ENCODE measurements at regions of chr11 and their contacts with region 1.

Region 1: DNA sequence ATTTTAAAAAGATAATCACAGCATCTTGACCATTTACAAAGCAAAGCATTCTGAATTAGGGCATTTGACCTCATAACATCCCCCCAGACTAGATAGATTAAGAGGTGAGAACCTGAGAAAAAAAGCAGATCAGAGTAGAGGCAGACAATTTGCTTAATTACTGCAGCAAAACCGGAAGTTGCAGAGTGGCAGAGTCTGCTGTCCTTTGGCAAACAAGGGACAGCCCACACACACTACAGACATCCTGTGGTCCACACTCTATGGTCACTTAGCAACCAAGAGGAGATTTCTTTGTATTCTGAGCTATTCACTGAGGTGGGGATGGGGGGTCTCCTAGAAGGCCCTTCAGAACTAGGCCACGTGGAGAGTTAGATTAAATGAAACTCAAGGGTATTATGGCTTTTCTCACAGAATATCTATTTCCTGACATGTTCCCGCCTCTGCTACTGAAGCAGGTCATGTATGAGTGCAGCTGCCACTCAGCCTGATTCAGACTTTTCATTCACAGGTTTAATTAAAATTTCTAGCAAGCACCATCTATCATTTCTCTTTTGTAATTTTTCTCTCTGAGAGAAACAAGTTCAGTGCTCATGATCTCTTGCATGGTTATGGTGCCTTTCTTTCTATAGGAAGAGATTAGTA is 48.5 kb downstream of the SVIP start:
- DNase-seq: no peak
- ATAC-seq: peak; percentile 81
- H3K4me3 ChIP-seq: no peak overlapping the region
- H3K27ac ChIP-seq: no peak overlapping the region
- H3K4me1 ChIP-seq: peaks cover 11% of the 10 kb centered on the region
- H3K27me3 ChIP-seq: no peaks in the 10 kb centered on the region
- CTCF ChIP-seq: no peak
- EP300 ChIP-seq: 0 out of 4 replicates have a peak, but pooled peaks of 1 of the 2 experiments have one; percentile 40
- POLR2A ChIP-seq: no peak
- RAD21 ChIP-seq: no peak

Region 2: GRCh38 chr11:22307065-22307464 is 474.0 kb before region 1 on chr11:
- CTCF ChIA-PET with region 1: no interaction called
- POLR2A ChIA-PET with region 1: no interaction called
- RAD21 ChIA-PET with region 1: no interaction called
- SMC1A ChIA-PET with region 1: no interaction called
- in situ Hi-C with region 1: no loop called
- intact Hi-C with region 1: no loop called
- DNase-seq: no peak
- ATAC-seq: no peak
- H3K4me3 ChIP-seq: no peak overlapping the region
- H3K27ac ChIP-seq: no peak overlapping the region
- H3K4me1 ChIP-seq: no peaks in the 10 kb centered on the region
- H3K27me3 ChIP-seq: no peaks in the 10 kb centered on the region
- CTCF ChIP-seq: no peak
- EP300 ChIP-seq: no peak
- POLR2A ChIP-seq: no peak
- RAD21 ChIP-seq: no peak

Region 3: DNA sequence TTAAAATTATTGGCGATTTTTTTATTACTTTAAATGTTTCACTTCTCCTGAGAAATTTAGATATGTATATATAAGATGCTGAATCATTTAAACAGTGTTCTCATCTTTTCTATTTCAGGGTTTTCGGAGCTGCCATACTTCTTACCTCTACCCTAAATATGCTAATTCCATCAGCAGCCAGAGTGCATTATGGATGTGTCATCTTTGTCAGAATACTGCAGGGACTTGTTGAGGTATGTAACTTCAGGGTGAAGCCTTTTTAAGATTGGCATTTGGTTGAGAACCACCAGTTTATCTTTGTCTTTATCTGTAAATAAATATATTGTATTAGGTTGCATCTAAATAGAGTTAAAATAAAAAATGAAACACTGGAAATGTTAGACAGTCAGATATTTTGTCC is 421.8 kb before region 1 on chr11:
- CTCF ChIA-PET with region 1: no interaction called
- POLR2A ChIA-PET with region 1: no interaction called
- RAD21 ChIA-PET with region 1: no interaction called
- SMC1A ChIA-PET with region 1: no interaction called
- in situ Hi-C with region 1: no loop called
- intact Hi-C with region 1: no loop called
- DNase-seq: no peak
- ATAC-seq: no peak
- H3K4me3 ChIP-seq: no peak overlapping the region
- H3K27ac ChIP-seq: no peak overlapping the region
- H3K4me1 ChIP-seq: no peaks in the 10 kb centered on the region
- H3K27me3 ChIP-seq: no peaks in the 10 kb centered on the region; a peak in 1 of 4 replicates
- CTCF ChIP-seq: no peak
- EP300 ChIP-seq: no peak
- POLR2A ChIP-seq: no peak
- RAD21 ChIP-seq: no peak

Region 4: GRCh38 chr11:22554221-22554620 is 226.9 kb before region 1 on chr11:
- CTCF ChIA-PET with region 1: no interaction called
- POLR2A ChIA-PET with region 1: no interaction called
- RAD21 ChIA-PET with region 1: no interaction called
- SMC1A ChIA-PET with region 1: no interaction called
- in situ Hi-C with region 1: no loop called
- intact Hi-C with region 1: loop called (anchors 5 kb)
- DNase-seq: peak; percentile 4
- ATAC-seq: peak; percentile 98
- H3K4me3 ChIP-seq: no peak overlapping the region
- H3K27ac ChIP-seq: no peak overlapping the region
- H3K4me1 ChIP-seq: no peaks in the 10 kb centered on the region
- H3K27me3 ChIP-seq: no peaks in the 10 kb centered on the region
- CTCF ChIP-seq: no peak
- EP300 ChIP-seq: peak in 1 of 2 experiments; percentile 43; a peak in 1 of 4 replicates
- POLR2A ChIP-seq: no peak
- RAD21 ChIP-seq: no peak

Region 5: DNA sequence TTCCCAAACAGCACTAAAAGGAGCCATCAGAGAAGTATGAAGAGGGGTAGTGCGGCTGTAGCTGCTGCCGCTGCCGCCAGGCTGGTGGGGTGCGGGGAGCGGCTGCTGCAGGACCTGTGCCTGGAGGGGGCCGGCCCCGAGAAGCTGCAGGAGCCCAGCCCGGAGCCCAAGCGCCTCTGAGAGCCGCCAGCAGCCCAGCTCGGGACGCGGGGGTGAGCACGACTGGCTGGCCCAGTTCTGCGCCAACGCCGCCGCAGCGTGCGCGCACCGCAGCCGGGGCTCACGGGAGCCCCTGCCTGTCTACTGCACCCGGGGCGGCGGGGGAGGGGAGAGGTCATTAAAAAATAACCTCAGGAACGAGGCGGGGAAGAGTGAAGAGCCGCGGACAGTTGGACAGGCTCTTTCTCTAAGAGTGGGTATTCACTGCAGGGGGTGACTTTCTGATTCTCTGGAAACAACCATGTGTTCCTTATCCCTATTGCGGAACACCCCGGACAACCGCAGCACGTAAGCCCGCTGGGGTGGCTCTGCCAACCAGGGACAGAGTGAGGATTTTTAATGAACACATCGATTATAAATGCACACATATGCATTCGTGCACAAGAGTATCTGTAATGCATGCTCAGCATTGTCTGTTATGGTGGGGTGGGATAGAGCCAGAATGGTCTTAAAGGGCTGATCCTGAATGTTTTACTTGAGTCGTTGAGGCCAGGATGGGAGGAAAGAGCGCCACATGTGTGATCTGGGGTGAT is 114.2 kb before region 1 on chr11:
- CTCF ChIA-PET with region 1: interaction called, 135 read pairs
- POLR2A ChIA-PET with region 1: interaction called, 8 read pairs
- RAD21 ChIA-PET with region 1: interaction called, 103 read pairs
- SMC1A ChIA-PET with region 1: interaction called, 251 read pairs
- in situ Hi-C with region 1: loop called (anchors 10 kb)
- intact Hi-C with region 1: no loop called
- DNase-seq: no peak
- ATAC-seq: peak; percentile 72
- H3K4me3 ChIP-seq: peak overlapping the region; percentile 59
- H3K27ac ChIP-seq: peak overlapping the region; percentile 77
- H3K4me1 ChIP-seq: no peaks in the 10 kb centered on the region
- H3K27me3 ChIP-seq: no peaks in the 10 kb centered on the region
- CTCF ChIP-seq: peak in 1 of 3 experiments; percentile 5; a peak in 1 of 6 replicates
- EP300 ChIP-seq: no peak
- POLR2A ChIP-seq: peak; percentile 65; the same call in 1 of the 2 replicates
- RAD21 ChIP-seq: no peak

Region 6: GRCh38 chr11:22730319-22730718 is 50.8 kb before region 1 on chr11:
- CTCF ChIA-PET with region 1: interaction called, 14 read pairs
- POLR2A ChIA-PET with region 1: no interaction called
- RAD21 ChIA-PET with region 1: interaction called, 59 read pairs
- SMC1A ChIA-PET with region 1: interaction called, 44 read pairs
- in situ Hi-C with region 1: no loop called
- intact Hi-C with region 1: loop called (anchors 2 kb)
- DNase-seq: no peak
- ATAC-seq: peak; percentile 88
- H3K4me3 ChIP-seq: no peak overlapping the region
- H3K27ac ChIP-seq: no peak overlapping the region
- H3K4me1 ChIP-seq: no peaks in the 10 kb centered on the region
- H3K27me3 ChIP-seq: no peaks in the 10 kb centered on the region
- CTCF ChIP-seq: peak; percentile 4 to 53 (median 9); a peak in 2 of 6 replicates
- EP300 ChIP-seq: no peak
- POLR2A ChIP-seq: no peak
- RAD21 ChIP-seq: peak; percentile 58

Region 7: GRCh38 chr11:22829231-22830081 is 48.4 kb after region 1 on chr11 and contains the start of gene SVIP:
- CTCF ChIA-PET with region 1: interaction called, 42 read pairs
- POLR2A ChIA-PET with region 1: interaction called, 6 read pairs
- RAD21 ChIA-PET with region 1: interaction called, 39 read pairs
- SMC1A ChIA-PET with region 1: interaction called, 30 read pairs
- in situ Hi-C with region 1: no loop called
- intact Hi-C with region 1: no loop called
- DNase-seq: peak; percentile 69
- ATAC-seq: peak; percentile 94
- H3K4me3 ChIP-seq: peak within 1 kb of the TSS; percentile 87
- H3K27ac ChIP-seq: peak within 1 kb of the TSS; percentile 59
- H3K4me1 ChIP-seq: no peaks in the 10 kb centered on the region
- H3K27me3 ChIP-seq: no peaks in the 10 kb centered on the region
- CTCF ChIP-seq: peak; percentile 76 to 92 (median 89)
- EP300 ChIP-seq: no peak
- POLR2A ChIP-seq: peak; percentile 91
- RAD21 ChIP-seq: peak; percentile 56
- polyA plus RNA-seq, gene SVIP: 59.0 to 78.0 TPM